Activated B cell treated with CpG ODN at 0.5 μM for 24 hours (primary cell): ENCODE measurements at regions of chr12 and their contacts with region 1.

Region 1: DNA sequence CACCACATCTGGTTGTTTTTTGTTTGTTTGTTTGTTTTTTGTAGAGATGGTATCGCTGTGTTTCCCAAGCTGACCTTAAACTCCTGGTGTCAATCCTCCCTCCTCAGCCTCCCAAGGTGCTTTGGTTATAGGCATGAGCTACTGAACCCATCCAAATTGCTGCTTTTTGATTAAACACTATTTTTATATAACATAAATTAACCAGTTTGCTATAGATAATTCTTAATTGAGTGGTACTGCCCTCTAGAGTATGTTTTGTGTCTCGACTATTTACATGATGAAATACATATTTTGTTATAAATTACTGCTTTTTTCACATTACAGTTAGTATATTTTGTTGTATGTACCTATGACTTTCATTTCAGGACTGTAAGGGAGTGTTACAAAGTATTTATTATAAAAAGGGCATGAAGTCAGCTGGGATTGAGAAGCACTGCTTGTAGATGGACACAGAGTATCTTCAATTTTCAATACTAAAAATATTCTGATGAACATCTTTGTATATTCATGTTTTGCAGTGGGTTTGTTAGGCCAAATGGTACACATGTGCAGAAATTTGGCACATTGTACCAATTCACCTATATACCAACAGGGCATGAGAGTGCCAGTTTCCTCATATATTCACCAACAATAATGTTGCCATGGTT is 14.9 kb upstream of the SCAF11 start:
- DNase-seq: no peak
- ATAC-seq: no peak
- H3K4me3 Mint-ChIP-seq: no peak overlapping the region
- H3K27ac Mint-ChIP-seq: no peak overlapping the region
- H3K4me1 Mint-ChIP-seq: no peaks in the 10 kb centered on the region
- H3K27me3 Mint-ChIP-seq: no peaks in the 10 kb centered on the region
- CTCF ChIP-seq: no peak

Region 2: DNA sequence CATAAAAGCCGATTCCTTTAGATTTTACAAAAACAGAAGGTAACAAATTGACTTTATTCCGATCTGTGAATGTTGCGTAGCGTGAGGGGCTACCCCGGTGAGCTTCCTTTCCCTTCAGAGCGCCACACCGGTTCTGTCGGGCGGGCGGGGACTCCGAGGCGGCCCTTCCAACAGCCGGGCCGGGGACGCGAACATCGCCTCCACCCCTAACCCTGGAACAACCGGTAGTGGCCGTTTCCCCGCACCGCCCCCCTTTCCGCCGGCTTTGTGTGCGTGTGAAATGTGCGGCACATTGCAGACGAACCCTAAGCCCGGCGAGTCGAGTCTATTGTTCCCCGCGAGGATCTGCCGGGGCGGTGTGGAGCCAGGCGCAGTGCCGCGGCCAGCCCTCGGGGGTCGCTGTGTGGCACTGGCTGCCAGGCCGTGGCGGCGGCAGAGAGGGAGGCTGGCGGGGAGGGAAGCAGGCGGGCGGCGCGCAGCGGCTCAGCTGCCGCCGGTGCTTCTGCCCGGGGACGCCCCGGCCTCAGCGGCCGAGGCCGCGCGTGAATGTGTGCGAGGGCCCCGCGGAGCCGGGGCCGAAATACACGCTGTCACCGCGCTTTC is 276.5 kb before region 1 on chr12:
- CTCF ChIA-PET with region 1: no interaction called
- POLR2A ChIA-PET with region 1: no interaction called
- intact Hi-C with region 1: no loop called
- DNase-seq: peak; percentile 97
- ATAC-seq: peak; percentile 68
- H3K4me3 Mint-ChIP-seq: peak overlapping the region; percentile 92
- H3K27ac Mint-ChIP-seq: peak overlapping the region; percentile 99
- H3K4me1 Mint-ChIP-seq: peaks cover 41% of the 10 kb centered on the region
- H3K27me3 Mint-ChIP-seq: no peaks in the 10 kb centered on the region
- CTCF ChIP-seq: peak; percentile 60

Region 3: GRCh38 chr12:45762185-45763110 is 242.8 kb before region 1 on chr12:
- CTCF ChIA-PET with region 1: no interaction called
- POLR2A ChIA-PET with region 1: no interaction called
- intact Hi-C with region 1: loop called (anchors 1 kb)
- DNase-seq: no peak
- ATAC-seq: no peak
- H3K4me3 Mint-ChIP-seq: no peak overlapping the region
- H3K27ac Mint-ChIP-seq: no peak overlapping the region
- H3K4me1 Mint-ChIP-seq: peaks cover 12% of the 10 kb centered on the region
- H3K27me3 Mint-ChIP-seq: no peaks in the 10 kb centered on the region
- CTCF ChIP-seq: no peak

Region 4: DNA sequence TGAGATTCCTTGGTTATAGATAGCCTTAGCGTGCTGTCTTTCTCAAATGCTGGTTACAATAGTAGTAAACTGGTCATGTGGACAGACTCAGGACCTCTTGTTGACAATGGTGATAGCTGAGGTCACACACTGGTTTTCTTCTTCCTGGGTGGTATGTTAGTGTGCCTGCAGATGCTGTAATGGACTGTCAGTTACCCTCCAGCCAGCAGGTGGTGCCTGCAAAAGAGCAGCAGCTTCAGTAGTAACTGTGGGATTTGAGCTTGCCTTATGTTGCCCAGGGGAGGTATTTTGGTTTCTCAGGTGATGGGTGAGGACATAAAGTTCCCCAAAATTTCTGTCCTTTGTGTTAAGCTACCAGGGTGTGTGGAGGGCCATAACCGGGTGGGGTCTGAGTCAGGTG is 18.8 kb after region 1 on chr12:
- CTCF ChIA-PET with region 1: no interaction called
- POLR2A ChIA-PET with region 1: no interaction called
- intact Hi-C with region 1: no loop called
- DNase-seq: no peak
- ATAC-seq: no peak
- H3K4me3 Mint-ChIP-seq: no peak overlapping the region
- H3K27ac Mint-ChIP-seq: no peak overlapping the region
- H3K4me1 Mint-ChIP-seq: no peaks in the 10 kb centered on the region
- H3K27me3 Mint-ChIP-seq: peaks cover 24% of the 10 kb centered on the region
- CTCF ChIP-seq: no peak

Region 5: DNA sequence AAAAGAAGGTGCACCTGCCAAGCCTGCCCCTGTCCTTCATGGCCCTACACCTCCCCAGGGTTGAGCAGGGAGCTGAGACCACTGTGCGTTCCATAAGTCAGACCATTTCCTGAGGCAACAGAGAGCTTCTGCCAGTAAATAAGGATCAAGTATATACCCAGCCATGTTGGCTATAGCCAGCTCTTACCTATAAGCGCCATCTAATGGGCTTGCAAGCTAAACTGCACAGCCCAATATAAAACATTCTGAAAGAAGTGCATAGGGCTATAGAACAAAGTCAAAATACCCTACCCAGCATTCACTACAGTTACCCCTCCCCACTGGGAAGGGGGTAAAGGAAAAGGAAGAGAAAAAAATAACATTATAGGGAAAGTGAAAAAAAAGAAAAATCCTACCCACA is 44.4 kb after region 1 on chr12:
- CTCF ChIA-PET with region 1: no interaction called
- POLR2A ChIA-PET with region 1: no interaction called
- intact Hi-C with region 1: no loop called
- DNase-seq: no peak
- ATAC-seq: no peak
- H3K4me3 Mint-ChIP-seq: no peak overlapping the region
- H3K27ac Mint-ChIP-seq: no peak overlapping the region
- H3K4me1 Mint-ChIP-seq: no peaks in the 10 kb centered on the region
- H3K27me3 Mint-ChIP-seq: peaks cover 2% of the 10 kb centered on the region
- CTCF ChIP-seq: no peak

Region 6: GRCh38 chr12:46073321-46073720 is 68.0 kb after region 1 on chr12:
- CTCF ChIA-PET with region 1: no interaction called
- POLR2A ChIA-PET with region 1: no interaction called
- intact Hi-C with region 1: no loop called
- DNase-seq: no peak
- ATAC-seq: no peak
- H3K4me3 Mint-ChIP-seq: no peak overlapping the region
- H3K27ac Mint-ChIP-seq: no peak overlapping the region
- H3K4me1 Mint-ChIP-seq: peaks cover 7% of the 10 kb centered on the region
- H3K27me3 Mint-ChIP-seq: peaks cover 4% of the 10 kb centered on the region
- CTCF ChIP-seq: no peak